ENCODE measurements at regions of chr14 and their contacts with region 1.

Region 1: DNA sequence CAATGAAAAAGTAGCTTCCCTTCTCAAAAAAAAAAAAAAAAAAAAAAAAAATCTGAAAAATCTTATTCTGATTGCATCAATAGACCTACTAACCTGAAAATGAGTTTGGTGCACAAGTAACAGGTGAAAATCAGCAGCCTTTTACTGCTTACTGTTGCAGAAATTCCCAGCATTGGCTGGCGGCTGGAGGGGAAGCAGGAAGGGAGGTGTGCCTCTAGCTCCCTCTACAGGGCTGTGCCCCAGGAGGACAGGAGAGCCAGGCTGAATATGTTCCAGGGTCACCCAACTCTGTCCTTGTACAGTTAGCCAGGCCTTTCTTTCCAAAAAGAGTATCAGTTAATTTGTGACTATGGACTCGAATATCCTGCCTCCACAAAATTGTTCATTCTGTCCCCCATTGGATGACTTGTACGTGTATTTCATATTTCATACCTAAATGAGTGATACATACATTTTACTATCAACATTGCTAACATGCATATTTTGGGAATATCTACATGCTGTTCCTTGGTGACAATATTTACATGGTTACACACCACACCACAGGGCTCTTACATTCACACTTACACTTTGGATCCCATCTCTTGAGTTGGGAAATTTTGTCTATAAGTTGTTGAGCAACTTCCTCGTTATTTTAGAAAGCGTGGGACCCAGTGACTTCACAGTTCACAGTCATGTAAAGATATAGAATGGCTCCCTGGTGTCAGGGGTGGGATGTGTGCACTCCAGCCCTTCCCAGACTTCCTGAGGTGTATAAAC is 124.8 kb downstream of the SAMD4A start:
- DNase-seq: peak; percentile 82
- H3K4me3 ChIP-seq: no peak overlapping the region
- H3K27ac ChIP-seq: peak overlapping the region; percentile 25
- H3K4me1 ChIP-seq: peaks cover 18% of the 10 kb centered on the region
- H3K27me3 ChIP-seq: no peaks in the 10 kb centered on the region
- CTCF ChIP-seq: peak; percentile 89 to 92
- POLR2A ChIP-seq: no peak

Region 2: DNA sequence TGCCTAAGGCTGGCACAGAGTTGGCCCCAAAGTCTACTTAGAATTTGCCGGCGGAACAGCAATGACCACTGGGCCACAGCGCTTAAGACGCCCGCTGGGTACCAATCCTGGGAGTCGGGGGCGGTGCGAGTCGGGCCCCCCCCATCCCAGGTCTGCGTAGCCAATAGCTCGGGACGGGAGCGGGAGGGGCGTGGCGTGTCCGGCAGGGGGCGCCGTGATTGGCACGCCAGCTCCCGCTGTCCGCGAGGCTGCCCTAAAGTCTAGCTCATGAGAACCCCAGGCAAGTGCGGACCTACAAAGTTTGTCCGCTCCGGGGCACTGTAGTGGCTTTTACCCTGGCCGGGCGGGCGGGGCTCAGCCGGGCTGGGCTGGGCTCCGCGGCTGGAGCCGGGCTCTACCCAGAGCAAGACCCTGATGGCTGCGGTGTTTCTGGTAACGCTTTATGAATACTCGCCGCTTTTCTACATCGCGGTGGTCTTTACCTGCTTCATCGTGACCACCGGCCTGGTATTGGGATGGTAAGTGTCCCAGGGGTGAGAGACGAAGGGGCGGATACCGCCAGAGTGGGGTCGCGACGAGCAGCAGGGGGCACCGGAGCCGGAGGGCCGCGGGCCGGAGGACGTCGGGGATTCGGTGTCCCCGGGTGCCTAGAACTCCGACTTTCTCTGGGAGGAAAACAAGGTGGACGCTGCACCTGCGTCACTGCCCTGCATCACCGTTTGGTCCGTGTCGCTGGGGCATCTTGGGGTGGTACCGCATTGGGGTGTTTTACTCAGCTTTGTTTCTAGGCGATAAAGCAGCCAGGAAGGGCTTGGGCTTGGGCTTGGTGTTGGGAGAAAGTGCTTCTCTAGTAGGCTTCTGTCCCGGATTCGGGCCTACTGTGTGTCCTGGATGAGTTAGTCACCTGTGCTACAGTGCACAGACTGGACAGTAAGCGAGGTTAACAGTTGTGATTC is 181.9 kb before region 1 on chr14 and contains the start of gene CGRRF1:
- CTCF ChIA-PET with region 1: no interaction called
- POLR2A ChIA-PET with region 1: no interaction called
- dilution Hi-C with region 1: no loop called
- intact Hi-C with region 1: loop called (anchors 5 kb)
- DNase-seq: peak; percentile 99
- H3K4me3 ChIP-seq: peak within 1 kb of the TSS; percentile 20 to 92 (median 91)
- H3K27ac ChIP-seq: peak within 1 kb of the TSS; percentile 10
- H3K4me1 ChIP-seq: peaks cover 9% of the 10 kb centered on the region
- H3K27me3 ChIP-seq: no peaks in the 10 kb centered on the region
- CTCF ChIP-seq: peak; percentile 18 to 65
- POLR2A ChIP-seq: peak; percentile 88
- total RNA-seq, gene CGRRF1: 15.7 and 15.8 TPM in 2 replicates

Region 3: GRCh38 chr14:54593860-54594259 is 97.8 kb before region 1 on chr14:
- CTCF ChIA-PET with region 1: interaction called, 14 read pairs
- POLR2A ChIA-PET with region 1: no interaction called
- dilution Hi-C with region 1: no loop called
- intact Hi-C with region 1: no loop called
- DNase-seq: peak; percentile 78
- H3K4me3 ChIP-seq: peak overlapping the region in 1 of 3 experiments; percentile 23
- H3K27ac ChIP-seq: peak overlapping the region; percentile 48
- H3K4me1 ChIP-seq: peaks cover 35% of the 10 kb centered on the region
- H3K27me3 ChIP-seq: no peaks in the 10 kb centered on the region
- CTCF ChIP-seq: no peak
- POLR2A ChIP-seq: no peak

Region 4: GRCh38 chr14:54600717-54601109 is 91.0 kb before region 1 on chr14:
- CTCF ChIA-PET with region 1: interaction called, 14 read pairs
- POLR2A ChIA-PET with region 1: no interaction called
- dilution Hi-C with region 1: no loop called
- intact Hi-C with region 1: no loop called
- DNase-seq: no peak
- H3K4me3 ChIP-seq: no peak overlapping the region
- H3K27ac ChIP-seq: no peak overlapping the region
- H3K4me1 ChIP-seq: peaks cover 31% of the 10 kb centered on the region
- H3K27me3 ChIP-seq: no peaks in the 10 kb centered on the region
- CTCF ChIP-seq: no peak
- POLR2A ChIP-seq: no peak

Region 5: DNA sequence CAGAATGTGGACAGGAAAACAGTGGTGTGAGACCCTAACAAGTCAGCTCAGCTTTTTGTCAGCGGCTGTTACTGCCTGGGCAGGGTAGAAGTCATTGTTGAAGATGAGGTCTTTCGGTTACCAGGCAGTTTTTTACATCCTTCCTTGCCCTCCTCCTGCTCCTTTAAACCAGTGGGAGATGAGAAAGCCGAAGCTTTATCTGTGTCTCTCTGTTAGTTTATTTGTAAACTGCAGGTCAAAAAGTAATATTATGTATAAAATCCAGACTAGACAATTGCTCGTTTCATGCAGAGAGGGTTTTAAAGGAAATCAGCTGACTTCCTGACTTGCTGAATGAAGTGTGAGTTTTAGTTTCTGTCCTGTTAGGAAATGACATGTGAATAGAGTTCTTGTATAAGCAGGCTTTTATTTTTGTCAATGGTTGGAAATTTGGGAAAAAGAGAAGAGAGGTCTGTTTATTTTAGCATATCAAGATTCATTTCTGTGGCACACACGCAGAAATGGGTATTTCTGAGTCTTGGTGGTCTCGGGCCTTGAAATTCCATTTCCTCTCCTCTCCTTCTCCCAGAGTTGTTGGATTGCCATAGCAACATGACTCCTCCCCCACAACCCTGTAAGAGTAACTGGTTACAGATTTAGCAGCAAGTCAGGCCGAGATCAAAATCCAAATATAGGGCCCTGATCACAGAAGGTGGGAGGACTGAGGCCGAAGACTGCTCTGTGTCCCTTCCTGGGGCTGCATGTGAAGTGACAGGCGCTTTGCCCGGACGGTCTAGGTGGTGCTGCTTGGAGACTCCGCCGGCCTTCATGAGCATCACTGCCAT is 64.0 kb before region 1 on chr14:
- CTCF ChIA-PET with region 1: interaction called, 22 read pairs
- POLR2A ChIA-PET with region 1: no interaction called
- dilution Hi-C with region 1: no loop called
- intact Hi-C with region 1: no loop called
- DNase-seq: peak; percentile 88
- H3K4me3 ChIP-seq: peak overlapping the region; percentile 11 to 57 (median 19)
- H3K27ac ChIP-seq: peak overlapping the region; percentile 97
- H3K4me1 ChIP-seq: peaks cover 63% of the 10 kb centered on the region
- H3K27me3 ChIP-seq: no peaks in the 10 kb centered on the region
- CTCF ChIP-seq: no peak
- POLR2A ChIP-seq: no peak

Region 6: GRCh38 chr14:54642801-54643697 is 48.7 kb before region 1 on chr14:
- CTCF ChIA-PET with region 1: interaction called, 18 read pairs
- POLR2A ChIA-PET with region 1: no interaction called
- dilution Hi-C with region 1: no loop called
- intact Hi-C with region 1: no loop called
- DNase-seq: no peak
- H3K4me3 ChIP-seq: no peak overlapping the region
- H3K27ac ChIP-seq: no peak overlapping the region
- H3K4me1 ChIP-seq: peaks cover 4% of the 10 kb centered on the region
- H3K27me3 ChIP-seq: no peaks in the 10 kb centered on the region
- CTCF ChIP-seq: peak in 1 of 2 donors; percentile 26
- POLR2A ChIP-seq: no peak

Region 7: DNA sequence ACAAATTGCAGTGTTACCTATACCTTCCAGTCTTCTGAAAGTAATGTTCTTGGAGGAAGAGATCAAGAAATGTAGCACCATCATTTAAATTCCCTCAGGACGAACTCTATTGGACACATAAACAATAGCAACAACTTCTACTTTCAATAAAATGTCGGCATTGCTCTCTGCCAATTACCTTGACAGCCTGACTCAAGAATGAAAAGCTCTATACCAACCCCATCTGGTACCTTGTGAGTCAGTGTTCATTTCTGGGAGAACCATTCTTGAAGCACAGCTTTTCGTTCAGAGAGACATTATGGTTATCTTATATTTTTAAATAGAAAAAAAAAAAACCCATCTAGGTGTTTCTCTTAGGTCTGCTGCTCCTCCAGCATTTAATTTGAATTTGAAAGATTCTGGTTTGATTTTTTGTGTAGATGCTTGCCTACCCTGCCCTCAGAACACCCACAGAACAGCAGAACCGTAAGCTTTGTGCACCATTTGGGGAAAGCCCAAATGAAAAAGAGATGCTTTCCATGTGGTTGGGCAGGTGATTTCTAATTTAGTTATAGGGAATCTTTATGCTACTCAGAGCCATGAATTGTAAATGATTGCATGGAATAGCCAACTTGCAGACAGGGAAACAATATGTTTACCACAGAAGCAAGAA is 31.2 kb after region 1 on chr14:
- CTCF ChIA-PET with region 1: interaction called, 11 read pairs
- POLR2A ChIA-PET with region 1: no interaction called
- dilution Hi-C with region 1: no loop called
- intact Hi-C with region 1: loop called (anchors 1 kb)
- DNase-seq: peak; percentile 47
- H3K4me3 ChIP-seq: no peak overlapping the region
- H3K27ac ChIP-seq: no peak overlapping the region
- H3K4me1 ChIP-seq: peaks cover 6% of the 10 kb centered on the region
- H3K27me3 ChIP-seq: no peaks in the 10 kb centered on the region
- CTCF ChIP-seq: peak; percentile 24 to 30
- POLR2A ChIP-seq: no peak